ENCODE measurements at regions of chr10 and their contacts with region 1.

Region 1: DNA sequence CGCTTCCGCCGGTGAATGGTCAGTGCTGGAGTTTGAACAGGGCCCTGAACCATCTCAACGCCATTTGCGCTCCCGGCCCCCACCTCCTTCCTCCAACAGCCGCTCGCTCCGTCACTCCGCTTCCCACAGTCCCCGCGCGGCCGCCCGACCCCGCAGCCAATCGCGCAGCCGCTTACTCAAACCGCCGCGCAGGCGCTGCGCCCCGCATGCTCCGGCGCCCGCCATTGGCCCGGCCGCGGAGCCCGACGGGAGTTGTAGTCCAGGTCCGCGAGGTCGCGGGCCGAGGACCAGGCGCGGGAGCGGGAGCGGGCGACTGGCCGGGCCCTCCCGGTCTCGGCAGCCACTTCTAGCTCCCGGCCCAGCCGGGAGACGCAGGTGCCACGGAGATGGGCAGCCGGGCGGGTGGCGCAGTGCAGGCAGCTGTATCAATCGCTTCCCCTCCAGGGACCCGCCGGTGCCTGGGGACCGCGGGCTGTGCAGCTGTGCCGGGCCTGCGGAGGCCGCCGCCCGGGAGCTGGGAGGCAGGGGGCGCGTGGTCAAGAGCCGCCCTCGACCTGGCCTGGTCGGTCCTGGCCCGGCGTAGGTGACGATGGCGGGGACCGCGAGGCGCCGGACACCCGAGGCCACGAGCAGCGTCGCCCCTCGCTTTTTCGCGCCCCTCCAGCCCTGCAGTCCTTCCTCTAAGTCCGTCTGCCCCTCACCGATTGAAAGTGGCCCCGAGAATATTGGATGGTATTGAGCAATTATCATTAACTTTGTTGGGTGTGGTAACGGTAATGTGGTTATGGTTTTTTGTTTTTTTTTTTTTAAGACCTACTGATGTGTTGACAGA is at the start of gene WAPL:
- DNase-seq: peak; percentile 92 to 99 (median 94)

Region 2: DNA sequence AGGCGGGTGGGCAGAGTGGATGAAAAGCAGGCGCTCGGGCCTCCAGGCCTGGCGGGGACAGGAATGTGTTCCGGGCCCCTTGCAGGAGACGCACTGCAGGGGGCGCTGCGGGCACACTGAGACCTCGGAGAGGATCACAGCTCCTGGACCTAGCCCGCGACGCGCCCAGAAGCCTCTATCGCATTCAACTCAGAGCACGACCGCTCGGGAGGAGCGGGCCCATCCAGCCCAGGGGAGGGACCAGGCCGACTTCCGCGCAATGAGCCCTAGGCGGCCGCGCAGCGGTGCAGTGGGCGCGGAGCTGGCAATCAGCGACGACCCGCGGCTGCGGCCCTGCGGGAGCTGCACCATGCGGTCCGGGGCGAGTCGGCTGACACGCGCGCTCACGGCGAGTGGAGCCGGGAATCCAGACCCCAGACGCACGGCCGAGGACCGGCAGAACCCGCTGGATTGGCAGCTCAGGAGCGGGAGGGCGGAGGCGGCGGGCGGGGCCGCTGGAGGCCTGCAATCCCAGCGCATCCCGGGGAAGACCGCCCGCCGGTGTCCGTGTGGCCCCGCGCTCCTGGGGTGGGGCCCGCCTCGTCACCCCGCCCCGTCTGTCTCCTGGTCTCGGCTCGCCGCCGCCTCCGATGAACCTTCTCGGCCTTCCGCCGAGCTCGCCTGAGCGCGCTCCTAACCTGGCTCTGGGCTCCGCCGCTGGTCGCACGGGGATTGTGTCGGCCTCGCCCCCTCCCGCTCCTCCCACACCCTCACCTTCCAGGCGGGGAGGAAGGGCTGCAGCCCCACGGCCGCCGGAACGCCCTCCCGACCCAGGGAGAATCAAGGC is 121.8 kb before region 1 on chr10:
- intact Hi-C with region 1: loop called (anchors 2 kb)
- DNase-seq: peak; percentile 89 to 99 (median 96)

Measured in posterior cingulate gyrus (tissue), 11 donors.